CD8-positive, alpha-beta T cell (primary cell): ENCODE measurements at regions of chr1 and their contacts with region 1.

Region 1: DNA sequence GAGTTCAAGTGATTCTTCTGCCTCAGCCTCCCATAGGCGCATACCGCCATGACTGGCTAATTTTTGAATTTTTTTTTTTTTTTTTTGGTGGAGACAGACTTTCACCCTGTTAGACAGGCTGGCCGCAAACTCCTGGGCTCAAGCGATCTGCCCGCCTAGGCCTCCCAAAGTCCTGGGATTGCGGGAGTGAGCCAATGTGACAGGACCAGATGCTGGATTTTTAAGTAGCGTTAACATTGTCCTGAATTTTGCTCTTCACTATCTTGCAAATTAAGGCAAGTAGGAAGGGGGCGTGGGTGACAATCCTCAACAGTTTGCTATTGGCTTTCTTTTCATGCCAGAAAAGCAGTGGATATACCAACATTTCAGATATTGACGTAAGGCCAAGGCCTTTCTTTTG is 49.7 kb upstream of the TSNAX start:
- DNase-seq: no peak
- ATAC-seq: no peak
- H3K4me3 ChIP-seq: no peak overlapping the region
- H3K4me3 Mint-ChIP-seq: no peak overlapping the region
- H3K27ac ChIP-seq: no peak overlapping the region
- H3K27ac Mint-ChIP-seq: no peak overlapping the region
- H3K4me1 ChIP-seq: no peaks in the 10 kb centered on the region
- H3K4me1 Mint-ChIP-seq: no peaks in the 10 kb centered on the region
- H3K27me3 ChIP-seq: no peaks in the 10 kb centered on the region
- H3K27me3 Mint-ChIP-seq: peaks cover 14% of the 10 kb centered on the region
- CTCF ChIP-seq: no peak

Region 2: DNA sequence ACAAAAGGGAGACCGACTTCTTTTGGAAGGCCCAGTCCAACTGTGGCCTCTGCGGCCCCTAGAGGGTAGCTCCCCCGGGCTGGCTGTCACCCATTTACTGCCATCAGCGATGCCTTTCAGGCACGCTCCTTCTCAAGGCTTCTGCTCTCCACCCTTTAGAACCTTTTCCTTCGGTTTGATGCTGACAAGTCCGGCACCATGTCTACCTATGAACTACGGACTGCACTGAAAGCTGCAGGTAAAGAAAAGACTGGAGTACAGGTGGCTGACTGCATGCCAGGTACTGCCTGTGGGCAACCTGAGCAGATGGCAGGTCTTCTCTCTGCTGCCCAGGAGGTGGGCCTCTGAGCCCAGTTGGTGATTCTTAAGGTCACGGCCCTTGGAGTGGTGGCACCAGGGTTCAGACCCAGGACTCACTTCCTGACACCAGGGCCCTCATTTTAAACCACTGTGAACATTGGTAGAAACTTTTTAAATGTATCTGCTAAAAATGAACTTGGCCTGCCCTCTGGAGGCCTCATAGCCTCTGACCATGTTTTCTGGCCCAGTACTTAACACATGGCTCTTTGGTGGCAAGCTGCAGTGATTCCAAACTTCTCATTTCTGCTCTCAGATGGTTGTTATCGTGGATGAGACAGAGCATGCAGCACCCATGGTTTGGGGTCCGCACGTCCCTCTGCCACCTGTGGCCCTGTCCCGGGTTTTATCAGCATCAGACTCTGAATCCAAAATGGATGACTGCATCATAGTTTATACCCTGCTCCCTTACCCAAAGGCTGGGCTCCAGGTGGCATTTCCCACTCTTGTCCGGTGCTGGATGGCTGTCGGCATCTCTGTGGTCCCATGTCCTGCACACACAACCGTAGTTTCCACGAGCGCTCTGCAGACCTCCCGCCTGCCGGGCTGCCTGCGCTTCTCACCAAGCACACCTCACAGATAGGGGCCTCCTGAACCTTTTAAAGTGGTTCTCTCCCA is 685.8 kb before region 1 on chr1:
- CTCF ChIA-PET with region 1: no interaction called
- POLR2A ChIA-PET with region 1: no interaction called
- intact Hi-C with region 1: loop called in 1 of 2 experiments (anchors 5 kb)
- DNase-seq: no peak
- ATAC-seq: no peak
- H3K4me3 ChIP-seq: no peak overlapping the region
- H3K4me3 Mint-ChIP-seq: no peak overlapping the region
- H3K27ac ChIP-seq: no peak overlapping the region
- H3K27ac Mint-ChIP-seq: no peak overlapping the region
- H3K4me1 ChIP-seq: no peaks in the 10 kb centered on the region
- H3K4me1 Mint-ChIP-seq: no peaks in the 10 kb centered on the region
- H3K27me3 ChIP-seq: no peaks in the 10 kb centered on the region
- H3K27me3 Mint-ChIP-seq: peaks cover 15% of the 10 kb centered on the region
- CTCF ChIP-seq: no peak

Region 3: GRCh38 chr1:231702801-231703395 is 224.1 kb after region 1 on chr1:
- CTCF ChIA-PET with region 1: no interaction called
- POLR2A ChIA-PET with region 1: no interaction called
- intact Hi-C with region 1: no loop called
- DNase-seq: no peak
- ATAC-seq: no peak
- H3K4me3 ChIP-seq: no peak overlapping the region
- H3K4me3 Mint-ChIP-seq: no peak overlapping the region
- H3K27ac ChIP-seq: no peak overlapping the region
- H3K27ac Mint-ChIP-seq: no peak overlapping the region
- H3K4me1 ChIP-seq: no peaks in the 10 kb centered on the region
- H3K4me1 Mint-ChIP-seq: peaks cover 8% of the 10 kb centered on the region
- H3K27me3 ChIP-seq: no peaks in the 10 kb centered on the region
- H3K27me3 Mint-ChIP-seq: no peaks in the 10 kb centered on the region
- CTCF ChIP-seq: no peak